ENCODE measurements at regions of chr20 and their contacts with region 1.

Region 1: DNA sequence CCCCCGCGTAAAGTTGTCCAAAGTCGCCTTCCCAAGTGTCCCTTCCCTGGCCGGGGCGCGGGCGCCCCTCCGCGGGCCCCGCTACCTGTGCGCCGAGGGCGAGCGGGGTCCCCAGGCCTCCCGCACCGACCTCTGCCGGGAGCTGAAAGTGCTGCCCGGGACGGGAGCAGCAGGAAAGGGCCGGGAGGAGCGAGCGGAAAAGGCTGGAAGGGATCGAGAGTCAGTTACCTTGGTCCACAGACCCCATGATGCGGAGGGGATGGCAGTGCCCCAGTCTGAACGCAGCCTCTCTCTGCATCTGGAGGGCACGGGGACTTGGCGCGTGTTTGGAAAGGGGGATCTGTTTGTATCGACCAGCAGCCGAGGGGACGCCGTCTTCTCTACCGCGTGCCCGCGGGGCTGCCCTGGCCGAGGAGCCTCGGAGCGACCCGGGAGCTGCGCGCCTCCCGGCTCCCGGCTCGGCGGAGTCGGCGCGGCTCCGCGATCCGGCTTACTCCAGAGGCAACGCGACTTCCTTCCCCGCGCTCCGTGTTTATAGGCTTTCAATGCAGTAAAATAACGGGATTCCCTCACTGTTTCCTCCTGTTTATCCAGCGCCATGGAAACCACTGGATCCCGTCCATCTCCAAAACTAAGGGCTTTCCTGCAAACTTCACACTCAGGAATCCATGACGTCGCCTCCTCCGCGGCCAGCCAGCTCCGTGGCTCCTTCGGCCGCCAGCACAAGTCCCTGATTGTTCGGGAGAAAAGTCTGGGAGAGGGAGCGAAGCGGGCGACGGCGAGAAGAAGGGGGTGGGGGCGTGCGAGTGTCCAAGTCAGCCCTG is 20.0 kb upstream of the NFATC2 start:
- DNase-seq: peak; percentile 89
- ATAC-seq: peak; percentile 83

Region 2: GRCh38 chr20:51385646-51386530 is 176.7 kb before region 1 on chr20:
- intact Hi-C with region 1: loop called (anchors 5 kb)
- DNase-seq: no peak
- ATAC-seq: peak; percentile 39

Region 3: DNA sequence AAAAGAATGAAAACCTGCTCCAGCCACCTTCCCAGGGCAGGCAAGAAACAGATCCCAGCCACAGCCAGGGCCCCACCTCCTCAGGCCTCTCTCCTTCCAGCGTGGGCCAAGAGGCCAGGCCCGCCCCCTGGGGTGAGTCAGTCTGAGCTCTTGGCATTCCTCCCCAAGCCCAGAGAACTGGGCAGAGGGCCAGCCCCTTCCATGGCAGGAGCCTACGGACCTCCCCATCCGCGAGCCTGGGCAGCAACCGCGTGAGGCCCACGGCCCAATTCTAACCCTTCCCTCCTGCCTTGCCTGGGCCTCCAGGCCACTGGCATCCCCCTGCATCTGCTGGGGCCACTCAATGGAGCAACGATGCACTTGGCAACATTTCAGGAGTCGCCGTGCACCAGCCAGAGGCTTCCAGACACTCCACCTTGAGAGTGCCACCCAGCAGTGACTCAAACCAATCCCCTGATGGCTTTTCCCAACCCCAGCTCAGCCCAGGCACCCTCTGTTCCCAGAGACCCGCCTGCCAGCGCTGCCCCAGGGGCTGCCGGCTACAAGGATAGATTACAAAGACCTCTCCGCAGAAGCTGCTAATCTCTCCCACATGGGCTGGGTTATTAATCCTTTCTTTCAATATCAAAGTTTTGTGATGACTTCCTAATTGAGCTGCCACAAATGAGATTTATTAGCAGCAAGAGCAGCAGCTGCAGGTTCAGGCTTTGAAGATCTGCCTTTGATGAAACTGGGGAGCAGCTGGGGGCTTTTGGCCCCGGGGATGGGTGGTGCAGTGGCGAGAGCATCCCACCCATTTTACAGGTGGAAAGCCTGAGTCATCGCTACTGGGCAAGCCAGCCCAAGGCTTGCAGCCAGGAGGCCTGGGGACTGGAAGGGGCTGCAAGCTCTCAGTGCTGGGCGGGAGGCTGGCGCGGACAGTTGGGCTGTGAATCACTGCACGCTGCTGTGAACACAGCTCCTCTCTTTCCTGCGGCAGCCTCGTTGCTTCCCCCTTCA is 105.7 kb before region 1 on chr20:
- intact Hi-C with region 1: loop called (anchors 5 kb)
- DNase-seq: peak; percentile 95
- ATAC-seq: peak; percentile 98

Region 4: DNA sequence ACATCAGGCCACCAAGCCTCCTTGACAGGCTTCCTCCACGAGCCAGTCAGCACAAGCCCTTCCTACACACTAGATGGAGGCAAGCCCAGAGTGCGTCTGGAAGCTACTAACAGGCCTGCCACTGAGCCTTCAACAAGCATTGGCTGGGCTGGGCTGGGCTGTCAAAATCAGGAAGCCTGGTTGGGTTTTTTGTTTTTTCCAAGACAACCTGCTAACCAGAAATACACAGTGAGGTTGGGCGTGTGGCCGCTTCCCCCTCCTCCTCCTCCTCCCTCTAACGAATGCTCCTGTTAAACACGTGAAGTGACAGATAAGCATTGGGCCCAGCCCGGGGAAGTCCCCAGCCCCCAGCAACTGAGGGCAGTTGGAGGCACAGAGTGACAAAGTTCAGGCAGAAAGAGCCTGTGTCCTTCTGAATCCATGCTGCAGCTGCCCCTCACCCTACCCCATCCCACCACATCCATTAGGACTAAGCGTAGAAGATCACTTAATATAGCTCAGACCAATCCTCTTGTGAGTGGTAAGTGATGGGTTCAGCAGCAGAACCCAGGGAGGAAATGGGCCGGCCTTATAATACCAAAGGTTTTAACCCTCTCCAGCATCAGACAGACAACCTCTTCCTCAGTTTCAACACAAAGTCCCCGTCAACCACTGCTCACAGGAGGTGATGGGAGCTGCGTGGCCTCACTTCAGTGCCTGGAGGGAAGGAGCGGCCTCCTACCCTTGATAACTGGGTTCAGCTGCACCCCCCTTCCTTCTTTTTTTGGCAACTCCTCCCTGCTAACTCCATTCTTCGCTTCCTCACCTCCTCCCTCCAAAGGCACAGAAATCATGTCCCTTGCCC is 21.1 kb before region 1 on chr20:
- intact Hi-C with region 1: loop called (anchors 2 kb)
- DNase-seq: peak; percentile 88
- ATAC-seq: peak; percentile 86

Region 5: GRCh38 chr20:51595058-51595532 is 32.6 kb after region 1 on chr20:
- intact Hi-C with region 1: loop called (anchors 2 kb)
- DNase-seq: peak; percentile 93
- ATAC-seq: peak; percentile 97

Measured in Right ventricle myocardium inferior (tissue), 1 donor.